ENCODE measurements at regions of chr18 and their contacts with region 1.

Region 1: GRCh38 chr18:52553441-52553840 is 213.4 kb downstream of the DCC start:
- DNase-seq: no peak
- ATAC-seq: no peak
- H3K4me3 ChIP-seq: no peak overlapping the region
- H3K27ac ChIP-seq: no peak overlapping the region
- H3K4me1 ChIP-seq: no peaks in the 10 kb centered on the region
- H3K27me3 ChIP-seq: no peaks in the 10 kb centered on the region
- CTCF ChIP-seq: no peak
- POLR2A ChIP-seq: no peak
- RAD21 ChIP-seq: no peak

Region 2: DNA sequence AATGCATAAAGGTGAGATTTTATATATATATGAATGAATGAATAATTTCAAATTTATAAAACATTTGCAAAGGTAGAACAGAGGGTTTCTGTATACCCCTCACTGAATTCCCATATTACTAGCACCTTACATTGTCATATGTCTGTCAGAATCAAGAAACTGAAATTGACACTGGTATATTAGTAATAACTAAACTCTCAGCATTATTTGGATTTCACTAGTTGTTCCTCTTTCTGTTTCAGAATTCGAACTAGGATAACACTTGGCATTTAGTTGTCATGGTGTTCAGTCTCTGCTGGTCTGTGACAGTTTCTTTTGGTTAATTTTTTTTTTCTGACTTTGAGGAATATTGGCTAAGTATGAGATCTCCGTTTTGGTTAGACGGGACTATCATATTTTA is 62.5 kb after region 1 on chr18:
- CTCF ChIA-PET with region 1: no interaction called
- POLR2A ChIA-PET with region 1: no interaction called
- RAD21 ChIA-PET with region 1: no interaction called
- intact Hi-C with region 1: loop called (anchors 10 kb)
- DNase-seq: no peak
- ATAC-seq: no peak
- H3K4me3 ChIP-seq: no peak overlapping the region
- H3K27ac ChIP-seq: no peak overlapping the region
- H3K4me1 ChIP-seq: no peaks in the 10 kb centered on the region
- H3K27me3 ChIP-seq: no peaks in the 10 kb centered on the region
- CTCF ChIP-seq: no peak
- POLR2A ChIP-seq: no peak
- RAD21 ChIP-seq: no peak

Measured in HCT116 (cell line).